Activated CD4-positive, alpha-beta memory T cell treated with anti-CD3 and anti-CD28 coated beads for 36 hours (primary cell): ENCODE measurements at regions of chr19 and their contacts with region 1.

Region 1: DNA sequence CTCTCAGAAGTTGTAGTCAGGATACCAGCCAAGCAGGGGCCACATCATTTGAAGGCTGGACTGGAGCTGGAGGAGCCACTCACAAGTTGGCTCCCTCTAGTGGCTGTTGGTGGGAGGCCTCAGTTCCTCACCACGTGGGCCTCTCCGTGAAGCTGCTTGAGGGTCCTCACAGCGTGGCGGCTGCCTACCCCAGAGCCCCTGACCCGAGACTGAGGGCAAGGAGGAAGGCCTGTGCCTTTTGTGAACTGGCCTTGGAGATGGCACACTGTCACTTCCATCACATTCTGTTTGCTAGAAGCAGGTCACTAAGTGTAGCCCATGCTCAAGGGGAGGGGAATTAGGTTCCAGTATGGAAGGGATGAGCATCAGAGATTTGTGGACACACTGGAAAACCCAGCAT is 14.6 kb downstream of the GNA11 start:
- DNase-seq: peak; percentile 79
- H3K4me3 Mint-ChIP-seq: no peak overlapping the region
- H3K27ac Mint-ChIP-seq: no peak overlapping the region
- H3K4me1 Mint-ChIP-seq: peaks cover 7% of the 10 kb centered on the region
- H3K27me3 Mint-ChIP-seq: no peaks in the 10 kb centered on the region

Region 2: DNA sequence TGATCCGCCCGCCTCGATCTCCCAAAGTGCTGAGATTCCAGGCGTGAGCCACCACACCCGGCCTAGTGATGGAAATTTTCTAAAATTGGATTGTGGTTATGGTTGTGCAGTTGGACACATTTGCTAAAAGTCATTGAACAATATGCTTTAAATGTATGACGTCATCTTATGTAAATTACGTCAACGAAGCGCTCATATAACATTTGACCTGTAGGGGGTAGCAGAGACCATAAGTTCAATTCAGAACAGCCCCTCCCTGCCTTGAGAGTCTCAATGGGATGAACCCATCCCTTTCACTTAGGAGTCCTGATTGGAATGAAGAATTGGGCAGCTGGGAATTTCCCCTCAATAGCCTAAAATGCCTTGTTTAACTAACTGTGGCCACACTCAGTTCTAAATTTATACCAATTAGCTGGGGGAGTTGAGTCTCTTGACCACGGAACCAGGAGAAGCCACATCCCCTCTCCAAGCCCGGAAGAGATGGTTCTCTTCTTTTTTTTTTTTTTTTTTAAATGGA is 146.7 kb before region 1 on chr19:
- CTCF ChIA-PET with region 1: interaction called, 204 read pairs
- POLR2A ChIA-PET with region 1: no interaction called
- intact Hi-C with region 1: loop called (anchors 1 kb)
- DNase-seq: peak; percentile 46
- H3K4me3 Mint-ChIP-seq: peak overlapping the region; percentile 31
- H3K27ac Mint-ChIP-seq: peak overlapping the region; percentile 24
- H3K4me1 Mint-ChIP-seq: peaks cover 2% of the 10 kb centered on the region
- H3K27me3 Mint-ChIP-seq: no peaks in the 10 kb centered on the region

Region 3: GRCh38 chr19:3035542-3036118 is 73.1 kb before region 1 on chr19:
- CTCF ChIA-PET with region 1: interaction called, 21 read pairs
- POLR2A ChIA-PET with region 1: no interaction called
- intact Hi-C with region 1: no loop called
- DNase-seq: peak; percentile 97
- H3K4me3 Mint-ChIP-seq: peak overlapping the region; percentile 86
- H3K27ac Mint-ChIP-seq: peak overlapping the region; percentile 92
- H3K4me1 Mint-ChIP-seq: peaks cover 15% of the 10 kb centered on the region
- H3K27me3 Mint-ChIP-seq: peaks cover 1% of the 10 kb centered on the region

Region 4: DNA sequence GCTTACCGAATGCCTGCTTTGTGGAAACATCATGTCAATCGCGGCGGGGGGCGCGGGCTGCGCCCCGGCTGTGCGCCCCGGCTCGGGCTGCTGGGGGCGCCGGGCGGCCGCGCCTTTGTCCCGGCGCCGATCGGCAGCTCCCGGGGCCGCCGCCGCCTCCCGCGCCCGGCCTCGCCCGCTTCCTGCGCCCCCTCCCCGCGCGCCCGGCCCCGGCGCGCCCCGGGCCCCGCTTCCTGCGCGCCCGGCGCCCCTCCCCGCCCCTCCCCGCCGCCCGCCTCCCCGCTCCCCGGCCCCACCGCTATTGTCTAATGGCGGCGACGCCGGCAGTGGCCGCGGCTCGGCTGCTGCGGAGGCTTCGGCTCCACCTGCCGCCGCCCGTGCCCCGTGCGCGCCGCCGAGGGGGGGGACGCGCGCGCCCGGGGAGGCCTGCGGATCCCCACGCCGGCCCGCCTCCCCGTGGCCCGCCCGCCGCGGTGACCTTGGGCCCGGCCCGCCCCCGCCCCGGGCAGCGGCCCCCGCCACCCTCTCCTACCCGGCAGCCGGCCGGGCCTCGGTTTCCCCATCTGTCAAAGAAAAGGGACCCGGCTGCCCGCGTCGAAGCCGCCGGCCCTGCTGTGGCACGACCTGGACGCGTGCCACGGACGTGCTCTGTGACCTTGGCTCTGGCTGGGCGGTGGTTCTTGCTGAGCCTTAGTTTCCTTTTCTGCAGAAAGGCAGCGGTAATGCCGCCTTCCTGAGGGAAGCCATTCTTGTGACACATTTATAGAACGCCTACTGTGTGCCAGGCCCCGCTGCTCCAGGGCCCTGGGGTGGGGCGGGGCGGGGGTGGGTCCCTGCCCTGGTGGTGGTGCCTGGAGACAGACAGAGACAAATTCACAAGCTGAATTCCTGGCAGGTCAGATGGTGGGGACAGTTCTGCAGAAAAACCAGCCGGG is 46.3 kb before region 1 on chr19 and contains the start of gene TLE5:
- CTCF ChIA-PET with region 1: interaction called, 12 read pairs
- POLR2A ChIA-PET with region 1: no interaction called
- intact Hi-C with region 1: no loop called
- DNase-seq: peak; percentile 74
- H3K4me3 Mint-ChIP-seq: peak within 1 kb of the TSS; percentile 85
- H3K27ac Mint-ChIP-seq: peak within 1 kb of the TSS; percentile 97
- H3K4me1 Mint-ChIP-seq: peaks cover 29% of the 10 kb centered on the region
- H3K27me3 Mint-ChIP-seq: no peaks in the 10 kb centered on the region
- total RNA-seq, gene TLE5: 411 to 426 TPM

Region 5: DNA sequence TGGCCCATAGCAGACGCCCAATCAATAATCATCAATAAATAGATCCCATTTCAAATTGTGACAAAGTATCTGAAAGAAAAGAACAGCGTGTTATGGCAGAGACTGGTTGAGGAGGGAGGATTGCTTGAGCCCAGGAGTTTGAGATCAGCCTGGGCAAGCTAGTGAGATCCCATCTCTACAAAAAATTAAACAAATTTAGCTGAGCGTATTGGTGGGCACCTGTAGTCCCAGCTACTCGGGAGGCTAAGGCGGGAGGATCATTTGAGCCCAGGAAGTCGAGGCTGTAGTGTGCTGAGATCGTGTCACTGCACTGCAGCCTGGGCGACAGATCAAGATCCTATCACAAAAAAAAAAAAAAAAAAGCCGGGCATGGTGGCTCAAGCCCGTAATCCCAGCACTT is 21.0 kb before region 1 on chr19:
- CTCF ChIA-PET with region 1: interaction called, 11 read pairs
- POLR2A ChIA-PET with region 1: no interaction called
- intact Hi-C with region 1: no loop called
- DNase-seq: no peak
- H3K4me3 Mint-ChIP-seq: no peak overlapping the region
- H3K27ac Mint-ChIP-seq: no peak overlapping the region
- H3K4me1 Mint-ChIP-seq: no peaks in the 10 kb centered on the region
- H3K27me3 Mint-ChIP-seq: peaks cover 1% of the 10 kb centered on the region

Region 6: GRCh38 chr19:3146677-3147100 is 37.9 kb after region 1 on chr19:
- CTCF ChIA-PET with region 1: interaction called, 10 read pairs
- POLR2A ChIA-PET with region 1: no interaction called
- intact Hi-C with region 1: no loop called
- DNase-seq: peak; percentile 79
- H3K4me3 Mint-ChIP-seq: no peak overlapping the region
- H3K27ac Mint-ChIP-seq: no peak overlapping the region
- H3K4me1 Mint-ChIP-seq: peaks cover 24% of the 10 kb centered on the region
- H3K27me3 Mint-ChIP-seq: no peaks in the 10 kb centered on the region